CD8-positive, alpha-beta memory T cell (primary cell): ENCODE measurements at regions of chr17 and their contacts with region 1.

Region 1: DNA sequence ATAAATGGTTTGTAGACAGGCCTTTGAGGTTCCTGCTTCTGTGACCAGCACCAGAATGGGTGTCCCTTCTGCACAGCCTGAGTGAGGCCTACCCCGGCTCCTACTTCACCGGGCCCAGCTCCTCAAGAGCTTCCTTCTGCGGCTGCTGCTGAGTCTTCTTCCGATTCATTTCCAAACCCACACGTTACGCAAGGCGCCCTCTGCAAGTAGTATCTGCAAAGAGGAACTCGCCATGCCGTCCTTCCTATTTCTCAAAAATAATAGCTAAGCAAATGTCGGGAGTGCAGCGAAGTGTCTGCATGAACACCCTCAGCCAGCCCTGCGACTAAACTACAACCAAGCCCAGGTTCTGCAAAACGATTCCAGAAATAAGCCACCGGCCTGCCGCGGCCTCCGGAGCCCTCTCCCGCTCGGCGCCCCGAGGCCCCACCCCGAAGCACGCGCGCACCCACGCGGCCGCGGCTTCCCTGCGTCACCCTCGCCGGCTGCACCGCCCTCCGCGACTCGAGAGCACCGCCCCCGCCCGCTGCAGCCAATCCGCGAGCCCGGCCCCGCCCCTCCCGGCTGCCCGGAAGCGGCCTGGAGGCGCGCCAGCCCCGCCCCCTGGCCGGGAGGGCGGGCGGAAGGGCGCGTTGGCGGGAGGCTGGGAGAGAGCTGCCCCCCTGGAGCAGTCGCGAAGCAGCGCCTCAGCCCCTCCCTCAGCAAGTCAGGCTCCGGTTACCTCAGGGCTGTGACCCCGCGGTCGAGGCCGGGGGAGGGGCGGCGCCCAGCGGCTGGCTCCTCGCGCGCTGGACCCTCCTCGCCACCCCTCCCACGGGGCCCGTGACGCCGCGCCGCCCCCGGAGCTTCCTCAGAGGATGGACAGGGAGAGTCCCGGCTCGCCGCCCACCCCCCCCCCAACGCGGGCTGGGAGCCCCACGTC is 8.3 kb downstream of the MNT start:
- DNase-seq: peak; percentile 96 to 98 (median 97)
- H3K4me3 ChIP-seq: peak overlapping the region; percentile 78
- H3K4me3 Mint-ChIP-seq: peak overlapping the region; percentile 90 to 99 (median 91)
- H3K27ac ChIP-seq: peak overlapping the region; percentile 98
- H3K27ac Mint-ChIP-seq: peak overlapping the region; percentile 93 to 100 (median 98)
- H3K4me1 ChIP-seq: peaks cover 50% of the 10 kb centered on the region
- H3K4me1 Mint-ChIP-seq: peaks cover 24 to 70% (median 34%) of the 10 kb centered on the region in 3 donors
- H3K27me3 ChIP-seq: no peaks in the 10 kb centered on the region
- H3K27me3 Mint-ChIP-seq: peaks cover 0 to 4% of the 10 kb centered on the region in 2 donors

Region 2: DNA sequence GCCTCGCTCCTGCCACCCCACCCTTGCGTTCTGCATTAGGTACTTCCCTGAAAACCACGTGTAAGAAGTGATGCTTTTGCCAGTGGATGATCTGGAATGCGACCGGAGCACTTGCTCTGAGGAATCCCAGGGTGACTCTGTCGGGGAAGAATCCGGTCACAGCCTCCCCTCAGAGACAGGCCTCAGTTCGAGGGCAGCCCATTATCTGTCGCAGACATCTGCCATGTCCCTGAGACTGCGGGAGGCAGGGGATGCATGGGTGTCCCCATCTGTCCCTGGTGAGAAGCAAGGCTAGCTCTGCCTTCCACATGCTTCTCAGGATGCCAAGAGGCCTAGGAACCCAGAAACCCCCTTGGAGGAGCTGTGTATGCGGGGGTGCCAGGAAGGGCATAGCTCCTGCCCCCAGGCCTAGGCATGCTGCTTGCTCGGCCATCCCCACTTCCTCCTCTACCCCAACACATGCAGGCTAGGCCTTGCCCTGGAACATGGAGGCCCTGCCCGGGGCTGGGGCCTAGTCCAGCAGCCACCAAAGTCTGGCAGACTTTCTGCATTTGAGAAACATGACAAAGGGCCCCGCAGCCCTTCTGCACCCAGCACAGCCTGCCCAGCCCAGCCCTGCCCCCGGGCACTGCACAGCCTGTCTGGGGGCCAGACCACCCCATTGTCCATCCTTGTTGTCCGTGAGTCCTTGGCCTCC is 12.1 kb before region 1 on chr17:
- CTCF ChIA-PET with region 1: interaction called, 37 read pairs
- POLR2A ChIA-PET with region 1: interaction called, 14 read pairs
- DNase-seq: no peak
- H3K4me3 ChIP-seq: no peak overlapping the region
- H3K4me3 Mint-ChIP-seq: no peak overlapping the region
- H3K27ac ChIP-seq: no peak overlapping the region
- H3K27ac Mint-ChIP-seq: peak overlapping the region in 2 of 8 donors; percentile 19 to 73
- H3K4me1 ChIP-seq: no peaks in the 10 kb centered on the region
- H3K4me1 Mint-ChIP-seq: peaks cover 0 to 7% (median 3%) of the 10 kb centered on the region in 3 donors
- H3K27me3 ChIP-seq: no peaks in the 10 kb centered on the region
- H3K27me3 Mint-ChIP-seq: peaks cover 0 to 1% of the 10 kb centered on the region in 2 donors